ENCODE measurements at regions of chr5 and their contacts with region 1.

Region 1: GRCh38 chr5:173866243-173866857 is 21.8 kb upstream of the CPEB4 start:
- DNase-seq: no peak
- H3K4me3 ChIP-seq: no peak overlapping the region
- H3K27me3 ChIP-seq: no peaks in the 10 kb centered on the region
- CTCF ChIP-seq: no peak

Region 2: DNA sequence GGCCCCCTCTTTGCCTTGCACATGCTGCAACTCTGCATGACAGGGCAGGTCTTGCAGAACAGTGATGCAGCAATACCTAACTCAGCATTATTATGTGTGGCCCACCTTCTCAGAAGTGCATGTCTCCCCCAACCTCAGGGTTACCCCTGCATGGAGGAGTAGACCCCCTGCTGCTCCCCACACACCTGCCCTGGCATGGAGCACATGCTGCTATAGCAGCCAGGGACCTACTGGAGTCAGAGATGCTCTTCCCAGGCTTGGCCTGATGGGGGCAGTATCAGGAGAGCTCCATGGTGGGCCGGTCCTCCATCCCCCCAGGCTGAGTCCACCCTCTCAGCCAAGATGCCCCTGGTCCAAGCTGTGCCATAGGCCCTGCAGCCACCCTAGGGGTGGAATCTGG is 236.7 kb before region 1 on chr5:
- CTCF ChIA-PET with region 1: no interaction called
- POLR2A ChIA-PET with region 1: interaction called, 14 read pairs
- DNase-seq: no peak
- H3K4me3 ChIP-seq: no peak overlapping the region
- H3K27me3 ChIP-seq: no peaks in the 10 kb centered on the region; the same call in 1 of the 2 replicates
- CTCF ChIP-seq: peak; percentile 38

Region 3: GRCh38 chr5:173954671-173955521 is 88.5 kb after region 1 on chr5:
- CTCF ChIA-PET with region 1: no interaction called
- POLR2A ChIA-PET with region 1: no interaction called
- DNase-seq: peak; percentile 76
- H3K4me3 ChIP-seq: no peak overlapping the region
- H3K27me3 ChIP-seq: no peaks in the 10 kb centered on the region
- CTCF ChIP-seq: no peak

Region 4: GRCh38 chr5:174020397-174021296 is 154.3 kb after region 1 on chr5:
- CTCF ChIA-PET with region 1: no interaction called
- POLR2A ChIA-PET with region 1: no interaction called
- DNase-seq: peak; percentile 2
- H3K4me3 ChIP-seq: no peak overlapping the region
- H3K27me3 ChIP-seq: peaks cover 2% of the 10 kb centered on the region; the same call in 1 of the 2 replicates
- CTCF ChIP-seq: peak; percentile 58